ENCODE measurements at regions of chr10 and their contacts with region 1.

Region 1: GRCh38 chr10:131786756-131787605 is 113.8 kb upstream of the PPP2R2D start:
- DNase-seq: peak; percentile 50
- H3K4me3 Mint-ChIP-seq: no peak overlapping the region
- H3K27ac Mint-ChIP-seq: no peak overlapping the region
- H3K4me1 Mint-ChIP-seq: no peaks in the 10 kb centered on the region
- H3K27me3 Mint-ChIP-seq: no peaks in the 10 kb centered on the region
- CTCF ChIP-seq: peak; percentile 40

Region 2: GRCh38 chr10:131569851-131570715 is 216.9 kb before region 1 on chr10:
- CTCF ChIA-PET with region 1: no interaction called
- intact Hi-C with region 1: loop called (anchors 2 kb)
- DNase-seq: no peak
- H3K4me3 Mint-ChIP-seq: no peak overlapping the region
- H3K27ac Mint-ChIP-seq: no peak overlapping the region
- H3K4me1 Mint-ChIP-seq: no peaks in the 10 kb centered on the region
- H3K27me3 Mint-ChIP-seq: peaks cover 22% of the 10 kb centered on the region
- CTCF ChIP-seq: no peak

Region 3: DNA sequence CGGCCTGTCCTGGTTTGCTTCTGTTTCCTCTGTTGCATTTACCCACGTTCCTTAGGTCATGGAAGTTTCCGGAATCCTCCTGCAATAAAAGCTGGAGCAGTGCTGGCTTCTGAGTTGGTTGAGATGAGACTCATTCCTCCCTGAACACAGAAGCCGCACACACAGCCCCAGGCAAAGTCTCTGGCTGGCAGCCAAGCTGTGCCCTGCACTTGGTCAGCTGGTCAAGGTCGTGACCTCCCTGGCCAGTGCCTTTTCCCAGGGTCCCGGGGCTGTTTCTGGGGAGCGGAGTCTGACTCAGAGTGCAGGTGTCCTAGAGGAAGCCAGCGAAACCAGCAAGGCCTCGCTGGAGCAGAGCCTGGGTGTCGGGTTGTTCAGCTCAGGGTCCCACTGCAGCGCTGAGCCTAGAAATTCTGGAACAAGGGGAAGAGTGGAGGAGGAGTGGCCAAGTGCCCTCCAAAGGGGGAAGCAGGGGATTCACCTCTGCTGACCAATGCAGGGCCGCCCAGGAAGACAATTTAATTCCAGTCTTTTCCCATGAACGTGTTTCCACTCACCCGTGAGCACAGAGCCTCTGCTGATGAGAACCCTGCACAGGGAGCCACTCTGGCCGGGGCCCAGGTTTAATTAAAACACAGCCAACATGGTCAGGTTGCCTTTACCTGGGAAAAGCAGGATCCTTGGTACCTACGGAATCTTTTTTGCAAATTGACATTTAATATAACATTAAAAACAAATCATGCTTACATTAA is 131.7 kb before region 1 on chr10:
- CTCF ChIA-PET with region 1: no interaction called
- intact Hi-C with region 1: loop called (anchors 10 kb)
- DNase-seq: peak; percentile 44
- H3K4me3 Mint-ChIP-seq: peak overlapping the region; percentile 28
- H3K27ac Mint-ChIP-seq: peak overlapping the region; percentile 74
- H3K4me1 Mint-ChIP-seq: peaks cover 24% of the 10 kb centered on the region
- H3K27me3 Mint-ChIP-seq: no peaks in the 10 kb centered on the region
- CTCF ChIP-seq: no peak

Region 4: GRCh38 chr10:131841131-131841660 is 54.2 kb after region 1 on chr10:
- CTCF ChIA-PET with region 1: no interaction called
- intact Hi-C with region 1: no loop called
- DNase-seq: no peak
- H3K4me3 Mint-ChIP-seq: no peak overlapping the region
- H3K27ac Mint-ChIP-seq: no peak overlapping the region
- H3K4me1 Mint-ChIP-seq: no peaks in the 10 kb centered on the region
- H3K27me3 Mint-ChIP-seq: peaks cover 9% of the 10 kb centered on the region
- CTCF ChIP-seq: no peak

Measured in Calu3 (cell line).